Activated T-helper 2 cell treated with anti-CD3 and anti-CD28 coated beads, Interferon-gamma antibody, Interleukin-2, Interleukin-4, amounts not matched to agents 10 μg/mL and 5 μg/mL and 100 μg/mL, durations not matched to agents 14 hours and 24 hours and 36 hours (primary cell): ENCODE measurements at regions of chr3 and their contacts with region 1.

Region 1: DNA sequence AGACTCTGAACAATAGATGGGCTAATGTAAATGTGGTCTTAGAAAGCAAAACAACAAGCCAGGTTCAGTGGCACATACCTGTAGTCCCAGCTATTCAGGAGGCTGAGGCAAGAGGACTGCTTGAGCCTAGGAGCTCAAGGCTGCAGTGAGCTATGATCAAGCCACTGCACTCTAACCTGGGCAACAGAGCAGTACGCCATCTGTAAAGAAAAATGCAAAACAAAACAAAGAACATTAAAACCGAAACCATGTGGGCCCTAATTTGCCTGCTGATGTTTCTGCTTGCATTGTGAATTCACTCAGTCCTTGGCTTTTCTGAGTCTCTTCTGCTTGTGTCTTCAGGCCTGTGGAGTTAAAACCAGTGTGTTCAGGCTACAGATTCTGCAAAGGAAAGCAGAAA is 56.7 kb downstream of the CCNL1 start:
- DNase-seq: no peak
- H3K4me3 Mint-ChIP-seq: no peak overlapping the region
- H3K27ac Mint-ChIP-seq: peak overlapping the region; percentile 76
- H3K4me1 Mint-ChIP-seq: peaks cover 44% of the 10 kb centered on the region
- H3K27me3 Mint-ChIP-seq: no peaks in the 10 kb centered on the region

Region 2: DNA sequence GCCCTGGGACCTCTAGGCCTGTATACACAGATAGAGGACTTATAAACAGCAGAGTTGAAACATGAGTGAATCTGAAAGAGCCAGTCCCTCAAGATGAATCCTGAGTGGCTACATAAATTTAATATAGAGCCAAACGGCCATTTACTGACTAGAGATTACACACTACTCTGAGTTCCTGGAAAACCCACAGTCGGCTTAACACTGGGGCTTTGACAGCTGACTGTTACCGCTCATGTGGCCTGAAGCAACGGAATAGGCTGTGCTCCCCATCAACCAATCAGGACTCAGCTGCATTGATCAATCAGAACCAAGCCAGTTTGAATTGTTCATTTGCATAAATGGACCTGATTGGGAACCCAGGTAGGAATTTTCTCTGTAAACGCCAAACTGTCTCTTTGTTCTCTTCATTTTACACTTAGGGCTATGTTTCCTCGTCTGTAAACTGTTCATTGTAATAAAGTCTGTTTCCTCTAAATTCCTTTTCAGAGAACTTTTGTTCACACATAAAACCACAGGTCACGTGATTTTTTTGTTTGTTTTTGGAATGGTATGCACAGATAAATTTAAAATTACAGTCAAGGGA is 16.2 kb after region 1 on chr3:
- intact Hi-C with region 1: loop called (anchors 2 kb)
- DNase-seq: peak; percentile 42
- H3K4me3 Mint-ChIP-seq: no peak overlapping the region
- H3K27ac Mint-ChIP-seq: peak overlapping the region; percentile 5
- H3K4me1 Mint-ChIP-seq: peaks cover 31% of the 10 kb centered on the region
- H3K27me3 Mint-ChIP-seq: no peaks in the 10 kb centered on the region

Region 3: DNA sequence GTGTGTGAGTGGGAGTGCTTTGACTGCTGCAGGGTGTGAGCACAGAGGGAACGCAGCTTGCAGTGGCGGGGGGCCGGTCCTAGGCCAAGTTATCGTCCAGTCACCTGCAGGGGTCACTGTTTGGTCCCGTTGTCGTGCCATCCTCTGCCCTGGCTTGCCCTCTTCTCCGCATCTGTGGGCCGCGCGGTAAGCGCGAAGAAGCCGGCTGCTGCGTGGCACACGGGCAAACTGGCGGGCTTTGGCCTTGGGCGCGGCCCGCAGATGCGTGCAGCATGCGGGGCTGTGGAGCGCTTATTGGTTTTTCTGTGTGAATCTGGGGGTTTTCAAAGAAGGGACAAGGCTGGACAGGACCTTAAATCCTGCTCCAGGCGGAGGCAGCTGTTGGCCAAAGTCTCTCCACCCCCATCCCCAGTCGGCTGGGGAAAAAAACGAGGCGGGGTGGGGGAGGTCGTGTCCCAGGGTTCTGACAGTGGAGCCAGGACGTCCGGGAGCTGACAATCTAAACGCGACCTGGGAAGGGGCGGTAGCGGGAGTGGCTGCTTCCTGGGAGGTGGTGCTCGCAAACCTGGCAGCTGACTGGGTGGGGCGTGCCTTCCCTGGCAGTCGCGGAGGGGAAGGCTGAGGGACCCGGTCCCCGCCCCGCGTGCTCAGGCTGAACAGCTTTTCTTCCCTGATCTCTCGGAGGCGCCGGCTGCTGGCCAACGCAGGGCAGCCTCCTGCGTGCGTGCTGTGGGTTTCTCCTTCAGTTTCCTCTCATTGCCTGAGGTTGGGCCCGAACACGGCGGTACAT is 439.6 kb after region 1 on chr3:
- intact Hi-C with region 1: no loop called
- DNase-seq: no peak
- H3K4me3 Mint-ChIP-seq: no peak overlapping the region
- H3K27ac Mint-ChIP-seq: no peak overlapping the region
- H3K4me1 Mint-ChIP-seq: no peaks in the 10 kb centered on the region
- H3K27me3 Mint-ChIP-seq: peaks cover 32% of the 10 kb centered on the region